ENCODE measurements at regions of chr16 and their contacts with region 1.

Region 1: GRCh38 chr16:29961479-29962343 is at the start of gene TMEM219:
- DNase-seq: peak; percentile 89 to 96
- H3K4me3 ChIP-seq: peak within 1 kb of the TSS; percentile 78
- H3K4me3 Mint-ChIP-seq: peak within 1 kb of the TSS; percentile 79
- H3K27ac Mint-ChIP-seq: peak within 1 kb of the TSS; percentile 79
- H3K4me1 ChIP-seq: no peaks in the 10 kb centered on the region
- H3K4me1 Mint-ChIP-seq: peaks cover 8% of the 10 kb centered on the region
- H3K27me3 ChIP-seq: no peaks in the 10 kb centered on the region
- H3K27me3 Mint-ChIP-seq: no peaks in the 10 kb centered on the region
- CTCF ChIP-seq: peak in 1 of 2 experiments; percentile 48
- total RNA-seq, gene TMEM219: 54.5 and 57.7 TPM in 2 replicates

Region 2: DNA sequence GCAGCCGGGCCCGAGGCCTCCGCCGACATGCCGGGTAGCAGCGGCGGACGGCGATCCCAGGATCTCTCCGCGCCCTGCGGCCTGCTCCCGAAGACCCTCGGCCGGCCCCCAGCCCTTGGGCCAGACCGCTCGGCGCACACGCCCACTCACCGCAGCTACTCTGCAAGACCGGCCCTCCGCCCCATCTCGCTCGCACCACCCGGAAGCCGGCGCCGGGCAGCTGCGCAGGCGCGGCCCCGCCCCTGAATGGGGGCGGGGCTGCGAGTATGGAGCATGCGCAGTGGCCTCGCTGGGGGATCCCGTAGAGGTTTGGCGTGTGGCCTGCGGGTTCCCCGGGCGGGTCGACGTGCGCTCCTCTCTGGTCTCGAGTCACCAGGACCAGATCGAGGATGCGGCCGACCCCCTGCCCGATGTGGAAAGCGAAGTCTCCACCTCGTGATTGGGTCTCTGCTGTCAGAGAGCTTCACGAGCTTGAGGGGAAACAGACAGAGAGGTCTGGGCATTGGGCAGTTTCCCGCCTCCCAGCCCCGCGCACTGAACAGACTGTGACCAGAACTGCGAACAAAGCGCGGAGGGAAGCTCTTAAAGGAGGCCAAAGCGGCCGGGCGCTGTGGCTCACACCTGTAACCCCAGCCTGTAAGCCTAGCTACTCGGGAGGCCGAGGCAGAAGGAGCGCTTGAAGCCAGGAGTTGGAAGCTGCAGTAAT is 35.6 kb before region 1 on chr16 and contains the start of gene KCTD13:
- CTCF ChIA-PET with region 1: interaction called, 9 read pairs
- POLR2A ChIA-PET with region 1: interaction called, 18 read pairs
- intact Hi-C with region 1: loop called (anchors 2 kb)
- DNase-seq: peak; percentile 82 to 93
- H3K4me3 ChIP-seq: peak within 1 kb of the TSS; percentile 97
- H3K4me3 Mint-ChIP-seq: peak within 1 kb of the TSS; percentile 94
- H3K27ac Mint-ChIP-seq: peak within 1 kb of the TSS; percentile 89
- H3K4me1 ChIP-seq: peaks cover 15% of the 10 kb centered on the region
- H3K4me1 Mint-ChIP-seq: peaks cover 23% of the 10 kb centered on the region
- H3K27me3 ChIP-seq: no peaks in the 10 kb centered on the region
- H3K27me3 Mint-ChIP-seq: no peaks in the 10 kb centered on the region
- CTCF ChIP-seq: no peak
- total RNA-seq, gene KCTD13: 13.0 and 14.9 TPM in 2 replicates

Region 3: GRCh38 chr16:29943846-29944669 is 17.7 kb before region 1 on chr16:
- CTCF ChIA-PET with region 1: interaction called, 4 read pairs
- POLR2A ChIA-PET with region 1: interaction called, 3 read pairs
- intact Hi-C with region 1: loop called (anchors 1 kb)
- DNase-seq: peak; percentile 86 to 94
- H3K4me3 ChIP-seq: no peak overlapping the region
- H3K4me3 Mint-ChIP-seq: peak overlapping the region; percentile 45
- H3K27ac Mint-ChIP-seq: peak overlapping the region; percentile 74
- H3K4me1 ChIP-seq: peaks cover 31% of the 10 kb centered on the region
- H3K4me1 Mint-ChIP-seq: peaks cover 18% of the 10 kb centered on the region
- H3K27me3 ChIP-seq: no peaks in the 10 kb centered on the region
- H3K27me3 Mint-ChIP-seq: no peaks in the 10 kb centered on the region
- CTCF ChIP-seq: peak in 1 of 2 experiments; percentile 38

Region 4: DNA sequence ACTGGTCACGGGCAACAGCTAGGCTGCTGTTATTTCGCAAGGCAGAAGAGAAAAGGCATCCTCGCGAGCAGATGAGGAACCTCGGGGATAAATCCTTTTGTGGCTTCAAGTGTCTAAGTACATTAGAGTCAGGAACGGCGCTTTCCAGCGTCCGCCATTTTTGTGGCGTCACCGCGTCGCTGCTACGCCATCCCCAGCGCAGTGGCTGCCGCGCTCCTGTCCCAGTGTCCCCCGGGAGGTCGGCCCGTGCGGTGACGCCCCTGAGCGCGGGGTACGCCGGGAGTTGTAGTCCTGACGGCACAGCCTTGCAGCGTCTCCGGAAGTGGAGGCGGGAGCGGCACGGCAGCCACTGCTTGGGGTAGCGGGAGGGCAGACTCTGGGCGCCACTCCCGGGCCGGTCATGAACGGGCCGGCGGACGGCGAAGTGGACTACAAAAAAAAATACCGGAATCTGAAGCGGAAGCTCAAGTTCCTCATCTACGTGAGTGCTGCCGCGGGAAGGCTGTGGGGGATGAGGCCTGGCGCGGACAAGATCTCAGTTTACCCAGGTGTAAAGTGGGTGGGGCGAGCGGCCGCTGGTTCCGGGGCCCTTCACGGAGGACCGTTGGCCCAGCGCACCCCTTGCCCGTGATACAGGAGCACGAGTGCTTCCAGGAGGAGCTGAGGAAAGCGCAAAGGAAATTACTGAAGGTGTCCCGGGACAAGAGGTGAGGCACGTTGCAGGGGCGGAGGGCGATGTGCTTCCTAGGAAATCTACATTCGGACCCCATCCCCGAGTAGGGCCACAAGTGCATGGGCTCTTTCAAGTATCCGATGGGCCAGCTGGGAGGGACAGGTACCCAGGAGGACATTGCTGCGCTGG is 34.4 kb after region 1 on chr16 and contains the start of gene INO80E:
- CTCF ChIA-PET with region 1: interaction called, 3 read pairs
- POLR2A ChIA-PET with region 1: no interaction called
- intact Hi-C with region 1: loop called (anchors 1 kb)
- DNase-seq: peak; percentile 97 to 98
- H3K4me3 ChIP-seq: peak within 1 kb of the TSS; percentile 68
- H3K4me3 Mint-ChIP-seq: peak within 1 kb of the TSS; percentile 99
- H3K27ac Mint-ChIP-seq: peak within 1 kb of the TSS; percentile 65
- H3K4me1 ChIP-seq: peaks cover 11% of the 10 kb centered on the region; the same call in 1 of the 2 replicates
- H3K4me1 Mint-ChIP-seq: peaks cover 12% of the 10 kb centered on the region
- H3K27me3 ChIP-seq: no peaks in the 10 kb centered on the region
- H3K27me3 Mint-ChIP-seq: no peaks in the 10 kb centered on the region
- CTCF ChIP-seq: no peak
- total RNA-seq, gene INO80E: 58.6 and 58.8 TPM in 2 replicates

Region 5: GRCh38 chr16:30650369-30651123 is 688.8 kb after region 1 on chr16 and contains the start of gene PRR14:
- CTCF ChIA-PET with region 1: no interaction called
- POLR2A ChIA-PET with region 1: interaction called, 13 read pairs
- intact Hi-C with region 1: no loop called
- DNase-seq: peak; percentile 98 to 99
- H3K4me3 ChIP-seq: peak within 1 kb of the TSS; percentile 80
- H3K4me3 Mint-ChIP-seq: peak within 1 kb of the TSS; percentile 86
- H3K27ac Mint-ChIP-seq: peak within 1 kb of the TSS; percentile 78
- H3K4me1 ChIP-seq: peaks cover 3% of the 10 kb centered on the region; the same call in 1 of the 2 replicates
- H3K4me1 Mint-ChIP-seq: peaks cover 12% of the 10 kb centered on the region
- H3K27me3 ChIP-seq: no peaks in the 10 kb centered on the region
- H3K27me3 Mint-ChIP-seq: no peaks in the 10 kb centered on the region
- CTCF ChIP-seq: peak; percentile 1 to 36
- total RNA-seq, gene PRR14: 26.3 and 28.2 TPM in 2 replicates